ENCODE measurements at regions of chr4 and their contacts with region 1.

Region 1: GRCh38 chr4:25862411-25863346 is at the start of gene SEL1L3:
- DNase-seq: peak; percentile 19
- H3K4me3 Mint-ChIP-seq: peak within 1 kb of the TSS; percentile 96
- H3K27ac Mint-ChIP-seq: peak within 1 kb of the TSS; percentile 91
- H3K4me1 Mint-ChIP-seq: peaks cover 24% of the 10 kb centered on the region
- H3K27me3 Mint-ChIP-seq: no peaks in the 10 kb centered on the region
- CTCF ChIP-seq: no peak
- total RNA-seq, gene SEL1L3: 28.1 and 49.4 TPM in 2 replicates

Region 2: DNA sequence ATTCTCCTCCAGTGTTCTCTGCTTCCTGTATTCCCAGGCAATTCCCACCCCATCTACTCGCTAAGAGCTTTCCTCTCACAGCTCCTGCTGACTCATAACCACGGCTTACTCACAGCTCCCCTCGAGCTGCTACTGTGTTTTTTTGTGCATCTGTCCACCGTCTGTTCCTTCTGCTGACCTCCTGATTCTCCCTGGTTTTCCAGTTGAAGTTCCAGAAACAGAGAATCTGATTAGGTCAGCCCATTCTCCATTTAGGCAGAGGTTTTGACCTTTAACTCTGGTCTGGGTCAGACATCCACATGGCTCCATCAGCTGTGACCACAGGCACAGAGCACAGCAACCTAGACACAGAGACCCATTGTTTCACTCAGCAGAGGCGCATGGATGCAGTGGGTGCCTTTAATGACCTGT is 45.8 kb after region 1 on chr4:
- CTCF ChIA-PET with region 1: interaction called, 5 read pairs
- POLR2A ChIA-PET with region 1: interaction called, 29 read pairs
- intact Hi-C with region 1: loop called (anchors 5 kb)
- DNase-seq: peak; percentile 91
- H3K4me3 Mint-ChIP-seq: no peak overlapping the region
- H3K27ac Mint-ChIP-seq: peak overlapping the region; percentile 69
- H3K4me1 Mint-ChIP-seq: peaks cover 17% of the 10 kb centered on the region
- H3K27me3 Mint-ChIP-seq: no peaks in the 10 kb centered on the region
- CTCF ChIP-seq: no peak

Region 3: GRCh38 chr4:25913851-25914669 is 51.4 kb after region 1 on chr4 and contains the start of gene SMIM20:
- CTCF ChIA-PET with region 1: interaction called, 4 read pairs
- POLR2A ChIA-PET with region 1: interaction called, 29 read pairs
- intact Hi-C with region 1: loop called (anchors 5 kb)
- DNase-seq: peak; percentile 91
- H3K4me3 Mint-ChIP-seq: peak within 1 kb of the TSS; percentile 98
- H3K27ac Mint-ChIP-seq: peak within 1 kb of the TSS; percentile 98
- H3K4me1 Mint-ChIP-seq: peaks cover 7% of the 10 kb centered on the region
- H3K27me3 Mint-ChIP-seq: no peaks in the 10 kb centered on the region
- CTCF ChIP-seq: no peak
- total RNA-seq, gene SMIM20: 38.2 and 45.1 TPM in 2 replicates

Measured in MCF 10A (cell line).